ENCODE measurements at regions of chr1 and their contacts with region 1.

Region 1: GRCh38 chr1:217431393-217431792 is 199.5 kb downstream of the GPATCH2 start:
- DNase-seq: no peak
- H3K4me3 Mint-ChIP-seq: no peak overlapping the region
- H3K27ac Mint-ChIP-seq: no peak overlapping the region
- H3K4me1 Mint-ChIP-seq: no peaks in the 10 kb centered on the region
- H3K27me3 Mint-ChIP-seq: no peaks in the 10 kb centered on the region

Region 2: GRCh38 chr1:217407534-217408001 is 23.8 kb before region 1 on chr1:
- CTCF ChIA-PET with region 1: no interaction called
- intact Hi-C with region 1: loop called (anchors 1 kb)
- DNase-seq: no peak
- H3K4me3 Mint-ChIP-seq: no peak overlapping the region
- H3K27ac Mint-ChIP-seq: no peak overlapping the region
- H3K4me1 Mint-ChIP-seq: no peaks in the 10 kb centered on the region
- H3K27me3 Mint-ChIP-seq: peaks cover 7% of the 10 kb centered on the region

Region 3: GRCh38 chr1:217453816-217454215 is 22.4 kb after region 1 on chr1:
- CTCF ChIA-PET with region 1: no interaction called
- intact Hi-C with region 1: no loop called
- DNase-seq: no peak
- H3K4me3 Mint-ChIP-seq: no peak overlapping the region
- H3K27ac Mint-ChIP-seq: no peak overlapping the region
- H3K4me1 Mint-ChIP-seq: no peaks in the 10 kb centered on the region
- H3K27me3 Mint-ChIP-seq: no peaks in the 10 kb centered on the region

Region 4: DNA sequence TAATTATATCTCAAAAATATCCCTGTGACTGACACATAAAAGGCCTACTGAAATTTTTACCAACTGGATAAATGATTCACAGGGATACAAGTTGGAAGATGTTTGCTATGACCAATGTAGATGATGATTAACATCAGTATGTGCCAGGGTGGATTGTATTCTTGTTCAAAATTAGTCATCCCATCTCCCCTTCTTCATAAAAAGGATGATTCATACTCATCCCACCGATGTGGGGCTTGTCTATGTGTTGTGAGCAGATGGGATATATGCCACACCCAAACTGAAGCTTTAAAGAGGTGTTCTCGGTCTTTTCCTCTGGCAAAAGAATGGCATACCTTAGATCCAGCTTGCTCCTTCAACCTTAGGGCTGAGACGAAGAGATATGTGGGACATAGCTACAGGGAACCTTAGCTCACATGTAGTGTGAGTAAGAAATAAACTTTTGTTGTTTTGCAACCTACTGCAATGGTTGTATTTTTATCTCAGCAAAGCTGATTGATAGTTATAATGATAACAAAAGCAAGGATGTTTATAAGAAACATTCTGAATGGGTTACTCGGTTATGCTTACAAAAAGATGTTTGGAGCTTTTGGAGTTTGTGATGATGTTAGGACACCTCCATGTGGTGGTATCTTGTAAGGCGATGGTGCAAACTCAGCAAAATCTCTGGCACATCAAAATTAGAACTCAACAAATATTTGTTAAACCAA is 229.1 kb after region 1 on chr1:
- CTCF ChIA-PET with region 1: no interaction called
- intact Hi-C with region 1: loop called (anchors 5 kb)
- DNase-seq: no peak
- H3K4me3 Mint-ChIP-seq: no peak overlapping the region
- H3K27ac Mint-ChIP-seq: no peak overlapping the region
- H3K4me1 Mint-ChIP-seq: no peaks in the 10 kb centered on the region
- H3K27me3 Mint-ChIP-seq: peaks cover 7% of the 10 kb centered on the region

Region 5: GRCh38 chr1:217747156-217747769 is 315.9 kb after region 1 on chr1:
- CTCF ChIA-PET with region 1: no interaction called
- intact Hi-C with region 1: loop called (anchors 2 kb)
- DNase-seq: no peak
- H3K4me3 Mint-ChIP-seq: no peak overlapping the region
- H3K27ac Mint-ChIP-seq: no peak overlapping the region
- H3K4me1 Mint-ChIP-seq: no peaks in the 10 kb centered on the region
- H3K27me3 Mint-ChIP-seq: no peaks in the 10 kb centered on the region

Measured in activated naive CD4-positive, alpha-beta T cell treated with anti-CD3 and anti-CD28 coated beads for 36 hours (primary cell).